Activated CD4-positive, alpha-beta memory T cell treated with anti-CD3 and anti-CD28 coated beads for 36 hours (primary cell): ENCODE measurements at regions of chr2 and their contacts with region 1.

Region 1: DNA sequence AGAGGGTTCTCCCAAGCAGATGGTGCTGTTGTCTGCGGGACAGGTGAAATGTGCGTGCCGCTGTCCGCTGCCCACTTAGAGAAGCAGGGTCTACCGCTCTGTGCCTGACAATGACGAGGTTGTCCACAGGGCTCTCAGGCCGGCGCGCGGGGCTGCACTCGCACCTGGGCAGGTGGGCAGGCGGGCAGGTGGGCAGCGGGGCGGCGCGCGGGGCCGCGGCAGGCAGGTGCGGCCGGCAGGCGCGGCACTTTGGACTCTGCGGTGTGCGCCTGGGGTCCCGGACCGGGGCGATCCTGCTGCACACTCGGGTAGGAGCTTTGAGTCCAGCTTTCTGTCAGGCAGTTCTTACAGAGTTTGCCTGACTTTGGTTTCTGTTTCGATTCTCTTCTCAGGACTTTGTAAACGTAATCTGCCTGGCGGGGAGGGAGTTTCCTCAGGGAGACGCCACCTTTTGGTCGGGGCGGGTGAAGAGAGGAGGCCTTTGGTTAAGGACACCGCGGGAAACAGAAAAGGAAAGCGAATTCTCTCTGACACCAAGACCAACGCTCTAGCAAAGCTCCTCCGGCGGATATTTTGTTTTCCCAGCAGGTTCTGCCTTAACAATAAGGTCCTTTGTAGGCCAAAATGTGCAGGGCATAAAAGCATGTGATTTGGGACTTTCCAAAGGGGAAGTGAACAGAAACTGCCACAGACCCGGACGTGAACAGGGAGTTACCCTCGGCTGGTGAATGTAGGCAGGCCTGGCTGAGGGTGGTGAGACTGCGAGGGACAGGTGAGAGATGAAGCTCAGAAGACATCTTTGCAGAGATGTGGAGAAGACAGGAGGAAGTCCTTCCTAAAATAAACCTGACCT is at the start of gene IFIH1:
- DNase-seq: peak; percentile 87
- H3K4me3 Mint-ChIP-seq: peak within 1 kb of the TSS; percentile 85
- H3K27ac Mint-ChIP-seq: peak within 1 kb of the TSS; percentile 95
- H3K4me1 Mint-ChIP-seq: peaks cover 55% of the 10 kb centered on the region
- H3K27me3 Mint-ChIP-seq: no peaks in the 10 kb centered on the region
- total RNA-seq, gene IFIH1: 33.3 to 34.2 TPM

Region 2: DNA sequence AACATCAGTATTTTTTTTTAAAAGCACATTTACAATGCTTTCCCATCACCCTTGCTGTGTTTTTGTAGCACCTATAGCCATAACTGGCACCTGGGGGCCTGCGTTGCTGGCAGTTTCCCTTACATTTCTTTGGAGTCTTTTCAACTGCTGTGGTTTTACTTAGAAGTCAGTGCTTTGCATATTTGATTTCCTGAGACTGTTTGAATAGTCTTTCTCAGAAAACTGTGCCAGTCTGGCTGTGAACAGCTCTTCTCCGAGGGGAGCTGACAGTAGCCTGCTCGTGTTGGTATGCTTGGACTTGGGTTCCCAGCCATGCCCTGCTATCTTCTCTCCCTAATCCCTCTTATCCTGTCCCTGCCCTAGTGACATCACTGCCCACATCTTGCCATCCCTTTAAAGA is 326.0 kb before region 1 on chr2:
- CTCF ChIA-PET with region 1: no interaction called
- POLR2A ChIA-PET with region 1: no interaction called
- intact Hi-C with region 1: loop called (anchors 10 kb)
- DNase-seq: peak; percentile 77
- H3K4me3 Mint-ChIP-seq: peak overlapping the region; percentile 73
- H3K27ac Mint-ChIP-seq: peak overlapping the region; percentile 92
- H3K4me1 Mint-ChIP-seq: peaks cover 61% of the 10 kb centered on the region
- H3K27me3 Mint-ChIP-seq: no peaks in the 10 kb centered on the region

Region 3: GRCh38 chr2:162013514-162014475 is 304.8 kb before region 1 on chr2:
- CTCF ChIA-PET with region 1: no interaction called
- POLR2A ChIA-PET with region 1: no interaction called
- intact Hi-C with region 1: loop called (anchors 5 kb)
- DNase-seq: no peak
- H3K4me3 Mint-ChIP-seq: peak overlapping the region; percentile 56
- H3K27ac Mint-ChIP-seq: peak overlapping the region; percentile 89
- H3K4me1 Mint-ChIP-seq: peaks cover 61% of the 10 kb centered on the region
- H3K27me3 Mint-ChIP-seq: no peaks in the 10 kb centered on the region

Region 4: DNA sequence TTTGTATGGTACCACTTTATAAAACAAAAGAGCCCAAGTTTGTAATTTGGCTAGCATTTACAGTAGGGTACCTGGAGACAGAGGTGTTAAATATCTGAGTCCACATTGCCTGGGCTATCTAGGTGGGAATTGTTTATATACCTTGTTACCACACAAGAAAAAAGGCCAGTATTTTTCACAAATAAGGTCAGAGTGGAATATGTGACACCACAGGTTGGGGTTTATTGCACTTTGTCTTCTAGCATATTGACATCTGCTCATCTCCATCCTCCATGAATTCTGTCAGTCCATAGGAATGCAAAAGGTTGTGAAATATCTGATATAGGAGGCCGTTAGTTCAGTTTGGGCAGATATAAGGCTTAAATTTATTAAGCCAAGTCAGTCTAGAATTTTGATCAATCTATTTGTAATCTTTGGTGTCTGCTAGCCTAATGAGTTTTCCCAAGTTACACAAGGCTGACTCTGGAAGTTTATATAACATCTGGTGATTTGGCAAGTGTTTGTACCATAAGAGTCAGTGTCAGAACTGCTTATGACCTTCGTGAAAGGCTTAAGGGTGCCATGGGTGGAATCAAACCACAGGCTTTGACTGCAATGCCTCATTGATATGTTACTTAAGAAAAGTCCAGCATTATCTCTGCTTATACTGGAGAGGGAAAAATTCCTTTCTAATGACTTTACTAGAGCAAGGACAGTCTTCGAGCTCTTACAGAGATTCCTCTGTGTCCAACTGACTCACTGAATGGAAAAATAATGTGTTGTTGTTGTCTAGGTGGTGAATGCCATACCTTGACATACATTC is 233.3 kb before region 1 on chr2:
- CTCF ChIA-PET with region 1: no interaction called
- POLR2A ChIA-PET with region 1: no interaction called
- intact Hi-C with region 1: no loop called
- DNase-seq: no peak
- H3K4me3 Mint-ChIP-seq: no peak overlapping the region
- H3K27ac Mint-ChIP-seq: no peak overlapping the region
- H3K4me1 Mint-ChIP-seq: no peaks in the 10 kb centered on the region
- H3K27me3 Mint-ChIP-seq: no peaks in the 10 kb centered on the region

Region 5: DNA sequence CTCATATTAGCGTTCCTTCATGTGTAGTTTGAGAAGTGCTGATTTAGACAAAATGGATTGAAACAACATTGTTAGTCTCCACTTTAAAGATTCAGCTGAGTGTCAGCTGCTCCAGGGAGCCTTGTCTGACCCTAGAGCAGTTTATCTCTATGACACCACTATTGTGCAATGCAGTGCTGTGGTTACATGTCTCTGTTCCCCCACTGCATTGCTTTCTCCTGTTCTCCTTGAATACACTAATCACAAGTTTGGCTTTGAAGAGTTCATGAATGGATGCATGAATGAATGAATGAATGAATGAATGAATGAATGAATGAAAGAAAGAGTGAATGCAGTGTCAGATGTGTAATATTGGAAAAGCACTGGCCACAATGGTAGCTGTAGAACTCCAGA is 204.8 kb before region 1 on chr2:
- CTCF ChIA-PET with region 1: no interaction called
- POLR2A ChIA-PET with region 1: no interaction called
- intact Hi-C with region 1: no loop called
- DNase-seq: no peak
- H3K4me3 Mint-ChIP-seq: no peak overlapping the region
- H3K27ac Mint-ChIP-seq: no peak overlapping the region
- H3K4me1 Mint-ChIP-seq: peaks cover 3% of the 10 kb centered on the region
- H3K27me3 Mint-ChIP-seq: no peaks in the 10 kb centered on the region

Region 6: GRCh38 chr2:162343824-162344616 is 25.5 kb after region 1 on chr2 and contains the start of gene GCA:
- CTCF ChIA-PET with region 1: interaction called, 6 read pairs
- POLR2A ChIA-PET with region 1: interaction called, 12 read pairs
- intact Hi-C with region 1: loop called (anchors 1 kb)
- DNase-seq: peak; percentile 99
- H3K4me3 Mint-ChIP-seq: peak within 1 kb of the TSS; percentile 80
- H3K27ac Mint-ChIP-seq: peak within 1 kb of the TSS; percentile 49
- H3K4me1 Mint-ChIP-seq: peaks cover 10% of the 10 kb centered on the region
- H3K27me3 Mint-ChIP-seq: no peaks in the 10 kb centered on the region
- total RNA-seq, gene GCA: 30.5 to 32.1 TPM